ENCODE measurements at regions of chr2 and their contacts with region 1.

Region 1: GRCh38 chr2:222993920-222994650 is 57.9 kb upstream of the KCNE4 start:
- DNase-seq: peak; percentile 79 to 91 (median 83)
- ATAC-seq: peak; percentile 97 to 100 (median 100)
- H3K4me3 ChIP-seq: peak overlapping the region in 2 of 12 donors; percentile 6 to 22
- H3K27ac ChIP-seq: peak overlapping the region in 11 of 12 donors; percentile 31 to 83 (median 73)
- H3K4me1 ChIP-seq: peaks cover 0 to 19% (median 10%) of the 10 kb centered on the region in 12 donors
- H3K27me3 ChIP-seq: no peaks in the 10 kb centered on the region
- CTCF ChIP-seq: no peak
- POLR2A ChIP-seq: no peak

Region 2: DNA sequence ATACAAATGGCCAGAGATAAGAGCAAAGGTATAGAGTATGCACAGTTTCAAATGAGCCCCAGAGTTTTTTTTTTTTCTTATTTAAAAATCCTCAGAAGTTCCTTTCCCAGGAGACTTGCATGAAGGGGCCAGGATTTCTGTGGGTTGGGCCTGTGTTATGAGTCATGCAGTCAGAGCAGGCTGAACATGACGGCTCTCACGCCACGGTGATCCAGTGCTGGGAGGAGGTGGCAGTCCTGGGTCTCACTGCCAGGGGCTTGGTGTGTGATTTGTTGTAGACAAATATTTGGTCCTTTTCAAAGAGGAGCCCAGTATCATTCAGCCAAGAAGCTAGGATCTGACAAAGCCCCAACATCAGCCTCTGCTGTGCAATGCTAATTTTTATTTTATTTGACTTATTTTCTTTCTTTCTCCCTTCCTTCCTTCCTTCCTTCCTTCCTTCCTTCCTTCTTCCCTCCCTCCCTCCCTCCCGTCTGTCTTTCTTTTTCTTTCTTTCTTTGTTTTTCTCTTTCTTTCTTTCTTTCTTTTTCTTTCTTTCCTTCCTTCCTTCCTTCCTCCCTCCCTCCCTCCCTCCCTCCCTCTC is 47.5 kb after region 1 on chr2:
- intact Hi-C with region 1: loop called in 3 of 10 experiments (anchors 5 to 10 kb)
- DNase-seq: peak; percentile 67 to 84 (median 78)
- ATAC-seq: peak; percentile 82 to 99 (median 93)
- H3K4me3 ChIP-seq: peak overlapping the region in 1 of 12 donors; percentile 21
- H3K27ac ChIP-seq: peak overlapping the region in 6 of 12 donors; percentile 33 to 71 (median 48)
- H3K4me1 ChIP-seq: peaks cover 0 to 20% (median 1%) of the 10 kb centered on the region in 12 donors
- H3K27me3 ChIP-seq: no peaks in the 10 kb centered on the region
- CTCF ChIP-seq: no peak
- POLR2A ChIP-seq: peak in 1 of 2 donors; percentile 37

Region 3: DNA sequence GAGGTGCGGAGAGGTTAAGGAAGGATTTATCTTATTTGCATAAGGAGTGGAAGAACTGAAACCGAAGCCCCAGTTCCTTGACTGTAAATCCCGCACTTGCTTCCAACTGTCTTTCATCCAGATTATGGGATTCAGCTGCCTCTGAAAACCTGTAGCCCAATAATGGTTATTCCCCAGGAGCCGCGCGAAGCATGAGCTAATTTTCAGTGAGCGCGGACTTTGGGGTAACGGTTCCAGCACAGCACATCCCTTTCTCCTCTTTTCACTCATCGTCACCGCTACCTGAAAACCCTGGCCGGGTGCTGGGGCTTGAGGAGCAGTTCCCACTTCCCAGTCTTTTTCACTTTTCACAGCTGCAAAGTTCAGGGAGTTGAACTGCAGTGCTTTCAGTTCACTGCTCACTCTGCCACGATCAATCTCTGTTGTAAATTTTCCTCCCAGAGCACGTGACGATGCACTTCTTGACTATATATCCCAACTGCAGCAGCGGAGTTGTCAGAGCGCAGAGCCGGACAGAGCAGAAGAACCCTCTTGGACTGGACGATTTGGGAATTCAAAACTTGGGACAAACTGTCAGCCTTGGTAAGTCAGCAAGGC is 57.7 kb after region 1 on chr2 and contains the start of gene KCNE4:
- intact Hi-C with region 1: loop called in 4 of 10 experiments (anchors 5 to 10 kb)
- DNase-seq: peak in 2 of 5 donors; percentile 37 to 39
- ATAC-seq: peak in 2 of 4 donors; percentile 19 to 32
- H3K4me3 ChIP-seq: peak within 1 kb of the TSS; percentile 5 to 66 (median 52)
- H3K27ac ChIP-seq: peak within 1 kb of the TSS; percentile 62 to 86 (median 75)
- H3K4me1 ChIP-seq: peaks cover 0 to 48% (median 18%) of the 10 kb centered on the region in 12 donors
- H3K27me3 ChIP-seq: no peaks in the 10 kb centered on the region
- CTCF ChIP-seq: no peak
- POLR2A ChIP-seq: peak in 1 of 2 donors; percentile 51
- total RNA-seq, gene KCNE4: 0.69 to 3.7 (median 1.6) TPM

Region 4: GRCh38 chr2:223093436-223094241 is 99.6 kb after region 1 on chr2:
- intact Hi-C with region 1: loop called in 2 of 10 experiments (anchors 10 kb)
- DNase-seq: peak; percentile 59 to 77 (median 68)
- ATAC-seq: peak; percentile 74 to 86 (median 80)
- H3K4me3 ChIP-seq: no peak overlapping the region
- H3K27ac ChIP-seq: peak overlapping the region in 10 of 12 donors; percentile 16 to 74 (median 52)
- H3K4me1 ChIP-seq: peaks cover 0 to 18% (median 8%) of the 10 kb centered on the region in 12 donors
- H3K27me3 ChIP-seq: no peaks in the 10 kb centered on the region
- CTCF ChIP-seq: peak in 1 of 12 donors; percentile 17
- POLR2A ChIP-seq: no peak

Region 5: DNA sequence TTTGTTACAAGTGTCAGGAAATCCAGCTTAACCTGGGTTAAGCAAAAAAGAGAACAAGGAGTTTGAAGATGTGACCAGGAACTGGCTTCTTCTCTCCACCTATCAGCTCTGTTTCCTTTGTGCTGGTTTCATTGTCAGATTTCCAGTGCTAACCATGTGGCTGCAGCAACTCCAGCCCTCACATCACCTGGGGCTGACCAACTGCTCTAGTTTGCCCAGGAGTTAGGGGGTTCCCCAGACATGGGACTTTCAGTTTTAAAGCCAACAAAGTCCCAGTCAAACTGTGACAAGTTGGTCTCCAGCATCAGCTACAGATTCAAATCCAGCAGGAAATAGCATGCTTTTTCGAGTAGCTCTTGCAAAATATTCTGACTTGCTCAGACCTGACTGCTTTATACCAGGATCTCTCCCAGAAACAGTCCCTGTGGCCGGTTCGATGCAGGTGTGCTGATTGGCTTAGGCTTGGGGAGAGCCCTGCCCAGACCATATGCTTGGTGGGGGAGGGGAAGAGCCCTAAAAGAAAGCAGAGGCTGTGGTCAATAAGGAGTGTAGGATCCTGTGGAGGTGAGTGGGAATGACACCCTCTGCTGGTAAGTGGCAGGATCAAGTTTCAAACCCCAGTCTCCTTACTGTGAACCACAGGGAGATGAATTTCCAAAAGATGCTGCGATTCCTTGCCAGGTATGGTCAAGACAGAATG is 107.4 kb after region 1 on chr2:
- intact Hi-C with region 1: loop called in 4 of 10 experiments (anchors 5 to 10 kb)
- DNase-seq: no peak
- ATAC-seq: peak in 3 of 4 donors; percentile 52 to 69 (median 61)
- H3K4me3 ChIP-seq: no peak overlapping the region
- H3K27ac ChIP-seq: peak overlapping the region in 6 of 12 donors; percentile 2 to 57 (median 23)
- H3K4me1 ChIP-seq: peaks cover 0 to 24% (median 6%) of the 10 kb centered on the region in 12 donors
- H3K27me3 ChIP-seq: no peaks in the 10 kb centered on the region
- CTCF ChIP-seq: peak in 11 of 12 donors; percentile 10 to 48 (median 34)
- POLR2A ChIP-seq: no peak